ENCODE measurements at regions of chr14 and their contacts with region 1.

Region 1: GRCh38 chr14:104677512-104678332 is 11.7 kb upstream of the INF2 start:
- DNase-seq: peak; percentile 31 to 73 (median 54)
- ATAC-seq: peak; percentile 80 to 84
- H3K4me3 Mint-ChIP-seq: peak overlapping the region; percentile 70 to 93 (median 84)
- H3K27ac Mint-ChIP-seq: peak overlapping the region in 9 of 10 donors; percentile 9 to 80 (median 55)
- H3K4me1 Mint-ChIP-seq: peaks cover 9 to 31% (median 15%) of the 10 kb centered on the region in 4 donors
- H3K27me3 Mint-ChIP-seq: no peaks in the 10 kb centered on the region

Region 2: GRCh38 chr14:104665657-104666522 is 11.8 kb before region 1 on chr14:
- POLR2A ChIA-PET with region 1: interaction called, 13 read pairs
- DNase-seq: peak in 8 of 10 donors; percentile 31 to 79 (median 52)
- ATAC-seq: peak; percentile 98
- H3K4me3 Mint-ChIP-seq: peak overlapping the region in 7 of 10 donors; percentile 28 to 68 (median 49)
- H3K27ac Mint-ChIP-seq: peak overlapping the region in 7 of 10 donors; percentile 59 to 90 (median 79)
- H3K4me1 Mint-ChIP-seq: peaks cover 15 to 37% (median 20%) of the 10 kb centered on the region in 4 donors
- H3K27me3 Mint-ChIP-seq: peaks cover 0 to 7% (median 0%) of the 10 kb centered on the region in 5 donors

Region 3: GRCh38 chr14:104689109-104689880 is 11.6 kb after region 1 on chr14 and contains the start of gene INF2:
- POLR2A ChIA-PET with region 1: interaction called, 58 read pairs
- DNase-seq: peak in 9 of 10 donors; percentile 23 to 73 (median 43)
- ATAC-seq: peak; percentile 58 to 62
- H3K4me3 Mint-ChIP-seq: peak within 1 kb of the TSS; percentile 69 to 88 (median 79)
- H3K27ac Mint-ChIP-seq: peak within 1 kb of the TSS; percentile 35 to 87 (median 70)
- H3K4me1 Mint-ChIP-seq: peaks cover 19 to 72% (median 61%) of the 10 kb centered on the region in 4 donors
- H3K27me3 Mint-ChIP-seq: no peaks in the 10 kb centered on the region
- polyA plus RNA-seq, gene INF2: 1.8 to 7.6 (median 5.1) TPM

Measured in naive thymus-derived CD8-positive, alpha-beta T cell (primary cell).